ENCODE measurements at regions of chr16 and their contacts with region 1.

Region 1: GRCh38 chr16:81808933-81809496 is 29.9 kb downstream of the PLCG2 start:
- DNase-seq: peak; percentile 91
- ATAC-seq: peak; percentile 78
- H3K4me3 ChIP-seq: peak overlapping the region in 4 of 5 experiments; percentile 5 to 43 (median 20)
- H3K4me3 Mint-ChIP-seq: peak overlapping the region; percentile 77
- H3K27ac ChIP-seq: peak overlapping the region; percentile 85 to 94
- H3K27ac Mint-ChIP-seq: peak overlapping the region; percentile 97
- H3K4me1 ChIP-seq: peaks cover 87 to 91% of the 10 kb centered on the region in 2 donors
- H3K4me1 Mint-ChIP-seq: peaks cover 96% of the 10 kb centered on the region
- H3K27me3 ChIP-seq: no peaks in the 10 kb centered on the region
- H3K27me3 Mint-ChIP-seq: no peaks in the 10 kb centered on the region
- CTCF ChIP-seq: no peak

Region 2: DNA sequence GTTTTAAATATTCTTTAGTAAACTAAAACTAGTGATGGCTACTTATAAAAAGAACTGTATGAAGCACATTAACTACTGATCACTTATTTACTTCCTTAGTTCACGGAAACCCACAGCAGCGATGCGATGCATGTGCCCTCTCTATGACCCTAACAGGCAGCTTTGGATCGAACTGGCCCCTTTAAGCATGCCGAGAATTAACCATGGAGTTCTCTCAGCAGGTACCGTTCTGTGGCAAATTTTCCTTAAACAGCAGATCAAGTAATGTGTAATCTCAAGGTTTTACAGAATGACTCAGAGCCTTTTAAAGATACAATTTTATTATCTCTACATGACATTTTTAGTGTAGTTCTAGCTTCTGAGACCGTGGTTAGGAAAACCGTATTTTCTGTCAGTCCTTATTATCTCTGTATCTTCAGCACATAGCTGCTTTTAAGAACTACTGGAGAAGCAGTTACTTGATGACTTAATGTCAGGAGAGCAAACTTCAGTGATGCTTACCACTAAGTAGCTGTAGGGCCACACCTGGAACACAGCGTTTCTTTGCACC is 451.2 kb before region 1 on chr16:
- CTCF ChIA-PET with region 1: no interaction called
- POLR2A ChIA-PET with region 1: no interaction called
- intact Hi-C with region 1: no loop called
- DNase-seq: no peak
- ATAC-seq: no peak
- H3K4me3 ChIP-seq: no peak overlapping the region
- H3K4me3 Mint-ChIP-seq: no peak overlapping the region
- H3K27ac ChIP-seq: no peak overlapping the region
- H3K27ac Mint-ChIP-seq: no peak overlapping the region
- H3K4me1 ChIP-seq: no peaks in the 10 kb centered on the region
- H3K4me1 Mint-ChIP-seq: no peaks in the 10 kb centered on the region
- H3K27me3 ChIP-seq: no peaks in the 10 kb centered on the region
- H3K27me3 Mint-ChIP-seq: no peaks in the 10 kb centered on the region
- CTCF ChIP-seq: no peak

Region 3: GRCh38 chr16:81752225-81752875 is 56.7 kb before region 1 on chr16:
- CTCF ChIA-PET with region 1: interaction called, 6 read pairs
- POLR2A ChIA-PET with region 1: interaction called, 10 read pairs
- intact Hi-C with region 1: no loop called
- DNase-seq: peak; percentile 87
- ATAC-seq: peak; percentile 96
- H3K4me3 ChIP-seq: peak overlapping the region in 4 of 5 experiments; percentile 6 to 58 (median 34)
- H3K4me3 Mint-ChIP-seq: peak overlapping the region; percentile 67
- H3K27ac ChIP-seq: peak overlapping the region; percentile 76 to 87
- H3K27ac Mint-ChIP-seq: peak overlapping the region; percentile 87
- H3K4me1 ChIP-seq: peaks cover 67 to 82% of the 10 kb centered on the region in 2 donors
- H3K4me1 Mint-ChIP-seq: peaks cover 67% of the 10 kb centered on the region
- H3K27me3 ChIP-seq: no peaks in the 10 kb centered on the region
- H3K27me3 Mint-ChIP-seq: no peaks in the 10 kb centered on the region
- CTCF ChIP-seq: no peak

Region 4: DNA sequence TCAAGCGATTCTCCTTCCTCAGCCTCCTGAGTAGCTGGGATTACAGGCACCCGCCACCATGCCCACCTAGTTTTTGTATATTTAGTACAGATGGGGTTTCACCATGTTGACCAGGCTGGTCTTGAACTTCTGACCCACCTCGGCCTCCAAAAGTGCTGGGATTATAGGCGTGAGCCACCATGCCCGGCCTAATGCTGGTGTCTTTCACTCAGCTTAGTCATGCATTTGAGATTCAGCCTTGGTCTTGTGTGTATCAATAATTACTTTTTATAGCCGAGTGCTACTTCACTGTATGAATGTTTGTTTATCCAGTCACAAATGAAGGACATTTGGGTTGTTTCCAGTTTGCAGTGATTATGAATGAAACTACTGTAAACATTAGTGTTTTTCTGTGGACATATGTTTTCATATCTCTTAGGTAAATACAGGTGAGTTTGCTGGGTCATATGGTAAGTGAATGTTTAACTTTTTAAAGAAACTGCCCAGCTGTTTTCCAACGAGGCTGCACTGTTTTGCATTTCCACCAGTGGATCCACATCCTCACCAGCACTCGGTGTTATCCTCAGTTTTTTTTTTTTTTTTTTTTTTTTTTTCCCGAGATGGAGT is 40.9 kb before region 1 on chr16:
- CTCF ChIA-PET with region 1: interaction called, 5 read pairs
- POLR2A ChIA-PET with region 1: interaction called, 10 read pairs
- intact Hi-C with region 1: no loop called
- DNase-seq: no peak
- ATAC-seq: no peak
- H3K4me3 ChIP-seq: no peak overlapping the region
- H3K4me3 Mint-ChIP-seq: no peak overlapping the region
- H3K27ac ChIP-seq: no peak overlapping the region
- H3K27ac Mint-ChIP-seq: no peak overlapping the region
- H3K4me1 ChIP-seq: peaks cover 34 to 48% of the 10 kb centered on the region in 2 donors
- H3K4me1 Mint-ChIP-seq: peaks cover 47% of the 10 kb centered on the region
- H3K27me3 ChIP-seq: no peaks in the 10 kb centered on the region
- H3K27me3 Mint-ChIP-seq: no peaks in the 10 kb centered on the region
- CTCF ChIP-seq: no peak

Region 5: GRCh38 chr16:81798311-81799137 is 10.5 kb before region 1 on chr16:
- CTCF ChIA-PET with region 1: interaction called, 21 read pairs
- POLR2A ChIA-PET with region 1: interaction called, 21 read pairs
- intact Hi-C with region 1: loop called (anchors 1 kb)
- DNase-seq: peak; percentile 87
- ATAC-seq: peak; percentile 80
- H3K4me3 ChIP-seq: peak overlapping the region in 3 of 5 experiments; percentile 4 to 38 (median 6)
- H3K4me3 Mint-ChIP-seq: peak overlapping the region; percentile 77
- H3K27ac ChIP-seq: peak overlapping the region; percentile 90 to 97
- H3K27ac Mint-ChIP-seq: peak overlapping the region; percentile 97
- H3K4me1 ChIP-seq: peaks cover 90 to 98% of the 10 kb centered on the region in 2 donors
- H3K4me1 Mint-ChIP-seq: peaks cover 77% of the 10 kb centered on the region
- H3K27me3 ChIP-seq: no peaks in the 10 kb centered on the region
- H3K27me3 Mint-ChIP-seq: no peaks in the 10 kb centered on the region
- CTCF ChIP-seq: no peak

Region 6: DNA sequence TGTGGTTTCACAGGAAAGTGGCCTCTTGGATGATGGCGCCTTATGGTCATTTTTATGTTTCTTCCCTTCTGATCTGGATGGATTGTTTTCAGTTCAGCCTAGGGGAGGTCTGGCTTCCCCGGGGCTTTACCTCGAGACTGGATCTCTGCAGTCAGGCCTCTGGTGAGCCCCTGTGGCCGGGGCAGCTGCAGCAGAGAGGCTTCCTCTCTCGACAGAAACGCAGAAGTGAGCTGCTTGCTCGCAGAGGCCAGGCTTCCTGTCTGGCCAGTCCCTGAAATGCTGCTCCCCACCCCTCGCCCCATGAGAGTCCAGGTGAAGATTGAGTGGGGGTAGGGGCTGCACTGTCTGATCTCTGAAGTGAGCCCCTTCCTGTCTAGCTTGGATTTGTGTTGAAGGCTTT is 14.1 kb after region 1 on chr16:
- CTCF ChIA-PET with region 1: interaction called, 25 read pairs
- POLR2A ChIA-PET with region 1: interaction called, 66 read pairs
- intact Hi-C with region 1: loop called (anchors 1 kb)
- DNase-seq: peak; percentile 86
- ATAC-seq: peak; percentile 51
- H3K4me3 ChIP-seq: peak overlapping the region; percentile 23 to 65 (median 54)
- H3K4me3 Mint-ChIP-seq: peak overlapping the region; percentile 75
- H3K27ac ChIP-seq: peak overlapping the region; percentile 94 to 98
- H3K27ac Mint-ChIP-seq: peak overlapping the region; percentile 92
- H3K4me1 ChIP-seq: peaks cover 96 to 100% of the 10 kb centered on the region in 2 donors
- H3K4me1 Mint-ChIP-seq: peaks cover 94% of the 10 kb centered on the region
- H3K27me3 ChIP-seq: no peaks in the 10 kb centered on the region
- H3K27me3 Mint-ChIP-seq: no peaks in the 10 kb centered on the region
- CTCF ChIP-seq: no peak

Region 7: DNA sequence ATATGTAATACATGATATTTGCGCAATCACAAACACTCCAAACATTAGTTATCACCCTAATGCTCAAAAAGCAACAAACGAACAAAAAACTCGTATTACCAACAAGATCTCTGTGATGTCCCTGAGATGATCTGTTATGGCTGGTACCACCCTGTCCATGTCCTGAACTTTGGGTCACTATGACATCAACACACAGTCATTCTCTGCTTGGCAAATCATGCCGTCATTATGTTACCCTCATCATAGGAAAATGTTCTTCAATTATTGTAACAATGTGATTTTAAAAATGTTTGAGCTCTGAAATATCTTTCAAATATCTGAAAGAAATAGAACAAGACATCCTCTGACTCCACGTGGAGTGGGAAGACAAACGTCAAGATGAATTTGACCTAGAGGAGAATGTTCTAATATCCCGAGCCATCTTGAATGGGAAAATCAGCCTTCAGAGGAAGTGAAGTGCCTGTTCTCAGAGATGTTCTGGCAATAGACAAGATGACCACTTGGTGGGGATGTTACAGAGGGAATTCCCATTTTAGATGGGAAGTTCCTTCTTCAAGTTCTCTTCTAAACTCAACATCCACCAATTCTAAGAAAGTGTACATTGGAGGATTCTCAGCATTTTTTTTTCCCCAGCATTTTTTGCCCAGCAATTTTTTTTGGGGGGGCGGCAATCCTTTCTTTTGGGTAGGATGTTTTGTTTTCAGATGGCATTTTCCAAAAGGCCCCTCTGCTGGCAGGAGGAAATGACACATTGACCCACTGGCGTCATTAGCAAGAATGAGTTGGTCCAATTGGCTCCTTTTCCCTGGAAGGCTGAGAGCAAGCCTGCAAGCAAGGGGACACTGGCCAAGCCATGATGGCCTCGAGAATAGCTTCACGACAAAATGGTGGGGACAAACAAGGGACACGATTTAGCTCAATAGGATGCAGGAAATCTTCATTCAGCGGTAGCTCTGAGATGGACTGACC is 222.4 kb after region 1 on chr16:
- CTCF ChIA-PET with region 1: no interaction called
- POLR2A ChIA-PET with region 1: no interaction called
- intact Hi-C with region 1: no loop called
- DNase-seq: no peak
- ATAC-seq: no peak
- H3K4me3 ChIP-seq: no peak overlapping the region
- H3K4me3 Mint-ChIP-seq: no peak overlapping the region
- H3K27ac ChIP-seq: no peak overlapping the region
- H3K27ac Mint-ChIP-seq: no peak overlapping the region
- H3K4me1 ChIP-seq: no peaks in the 10 kb centered on the region
- H3K4me1 Mint-ChIP-seq: no peaks in the 10 kb centered on the region
- H3K27me3 ChIP-seq: peaks cover 0 to 2% (median 0%) of the 10 kb centered on the region in 4 experiments
- H3K27me3 Mint-ChIP-seq: peaks cover 25% of the 10 kb centered on the region
- CTCF ChIP-seq: no peak